WTC11 (cell line): ENCODE measurements at regions of chr11 and their contacts with region 1.

Region 1: DNA sequence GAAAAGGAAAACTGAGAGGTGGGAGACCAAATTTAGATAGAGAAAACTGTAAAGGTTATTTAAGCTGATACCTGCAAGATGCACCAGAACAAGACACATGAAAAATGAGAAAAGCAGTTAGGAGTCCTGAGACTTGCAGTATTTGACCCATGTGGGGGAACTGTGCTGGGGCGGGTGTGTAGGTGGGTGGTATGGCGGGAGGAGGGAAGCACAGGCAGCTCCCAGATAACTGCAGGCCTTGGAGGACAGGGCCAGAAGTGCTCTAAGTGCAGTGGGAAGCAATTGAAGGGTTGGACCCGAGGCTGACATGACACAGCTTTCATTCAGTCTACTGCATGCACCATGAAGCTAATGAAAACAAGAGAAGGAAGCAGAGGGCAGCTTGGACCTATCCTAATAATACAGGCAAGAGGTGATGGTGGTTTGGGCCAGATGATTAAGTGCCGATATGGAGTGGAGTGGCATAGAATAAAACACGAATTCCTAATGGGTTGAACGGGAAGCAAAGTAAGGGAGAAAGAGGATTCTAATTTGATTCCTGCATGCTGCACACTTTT is 48.0 kb upstream of the ANO3 start:
- DNase-seq: no peak
- ATAC-seq: peak; percentile 60
- H3K4me3 Mint-ChIP-seq: peak overlapping the region; percentile 81
- H3K27ac Mint-ChIP-seq: no peak overlapping the region
- H3K4me1 Mint-ChIP-seq: peaks cover 8% of the 10 kb centered on the region
- H3K27me3 Mint-ChIP-seq: no peaks in the 10 kb centered on the region
- CTCF ChIP-seq: no peak

Region 2: DNA sequence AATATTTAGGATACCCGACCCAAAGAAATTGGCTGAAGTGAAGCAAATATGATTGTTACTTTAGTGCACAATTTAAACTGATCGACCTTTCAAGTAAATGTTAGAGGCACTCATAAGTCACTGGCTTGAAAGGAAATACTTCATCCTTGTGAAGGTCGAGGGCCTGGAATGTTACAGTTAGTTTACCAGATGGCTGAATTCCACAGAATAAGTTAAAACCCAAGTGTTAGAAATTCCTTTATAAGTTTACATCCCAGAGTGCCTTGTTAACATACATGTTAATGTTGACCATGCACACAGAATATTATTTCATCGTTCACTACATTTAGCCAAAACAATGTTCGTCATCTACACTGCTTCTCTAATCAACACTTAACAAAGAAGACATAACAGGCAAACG is 187.5 kb before region 1 on chr11:
- CTCF ChIA-PET with region 1: no interaction called
- POLR2A ChIA-PET with region 1: no interaction called
- DNase-seq: no peak
- ATAC-seq: no peak
- H3K4me3 Mint-ChIP-seq: no peak overlapping the region
- H3K27ac Mint-ChIP-seq: no peak overlapping the region
- H3K4me1 Mint-ChIP-seq: peaks cover 3% of the 10 kb centered on the region; the same call in 1 of the 2 replicates
- H3K27me3 Mint-ChIP-seq: no peaks in the 10 kb centered on the region
- CTCF ChIP-seq: no peak

Region 3: GRCh38 chr11:26297189-26297975 is 13.5 kb after region 1 on chr11:
- CTCF ChIA-PET with region 1: interaction called, 15 read pairs
- POLR2A ChIA-PET with region 1: no interaction called
- DNase-seq: no peak
- ATAC-seq: peak; percentile 59
- H3K4me3 Mint-ChIP-seq: no peak overlapping the region
- H3K27ac Mint-ChIP-seq: peak overlapping the region; percentile 60
- H3K4me1 Mint-ChIP-seq: peaks cover 6% of the 10 kb centered on the region
- H3K27me3 Mint-ChIP-seq: no peaks in the 10 kb centered on the region; the same call in 1 of the 2 replicates
- CTCF ChIP-seq: peak; percentile 62; the same call in 1 of the 2 replicates